ENCODE measurements at regions of chr5 and their contacts with region 1.

Region 1: GRCh38 chr5:132820162-132820754 is 7.2 kb downstream of the SOWAHA start:
- DNase-seq: peak; percentile 61 to 92 (median 80)
- ATAC-seq: peak; percentile 84 to 86 (median 85)
- H3K4me3 ChIP-seq: peak overlapping the region in 1 of 2 donors; percentile 38
- H3K4me3 Mint-ChIP-seq: peak overlapping the region; percentile 45 to 73 (median 67)
- H3K27ac ChIP-seq: no peak overlapping the region
- H3K27ac Mint-ChIP-seq: no peak overlapping the region
- H3K4me1 ChIP-seq: peaks cover 5 to 19% of the 10 kb centered on the region in 2 experiments
- H3K4me1 Mint-ChIP-seq: peaks cover 10 to 12% (median 11%) of the 10 kb centered on the region in 3 donors
- H3K27me3 ChIP-seq: peaks cover 3 to 53% of the 10 kb centered on the region in 2 experiments
- H3K27me3 Mint-ChIP-seq: peaks cover 7 to 42% of the 10 kb centered on the region in 2 donors

Region 2: DNA sequence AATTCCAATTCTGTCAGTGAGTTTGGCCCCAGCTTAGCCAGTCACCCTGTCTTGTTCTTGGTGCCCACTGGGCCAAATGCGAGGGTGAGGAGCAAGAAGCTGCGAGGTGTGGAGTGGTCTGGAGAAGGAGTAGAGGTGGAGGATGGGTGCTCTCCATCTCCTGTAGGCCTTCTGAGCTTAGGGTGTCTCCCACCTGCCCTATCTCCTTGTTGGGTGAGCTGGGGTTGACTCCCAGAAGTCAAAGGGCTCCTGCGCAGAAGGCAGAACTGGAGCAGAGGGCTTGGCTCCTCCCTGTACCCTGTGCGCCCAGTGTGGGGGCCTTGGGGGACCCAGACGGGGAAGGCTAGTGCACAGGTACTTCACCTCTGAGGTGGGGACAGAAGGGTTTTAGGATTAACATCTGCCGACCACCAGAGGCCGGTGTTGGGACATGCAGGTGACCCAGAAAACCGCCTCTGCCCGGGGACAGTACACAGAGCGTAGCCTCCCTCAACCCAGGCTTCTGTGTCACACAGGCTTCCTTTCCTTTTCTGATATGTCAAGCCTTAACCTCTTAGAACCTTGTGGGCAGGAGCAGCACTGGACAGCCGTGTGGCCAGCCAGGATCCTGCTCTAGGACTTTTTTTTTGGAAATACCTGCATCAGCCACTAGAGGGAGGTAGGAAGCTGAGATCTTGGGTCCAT is 293.8 kb before region 1 on chr5:
- CTCF ChIA-PET with region 1: interaction called in 1 of 2 experiments, 10 read pairs
- POLR2A ChIA-PET with region 1: no interaction called
- DNase-seq: peak in 18 of 35 experiments; percentile 5 to 70 (median 16)
- ATAC-seq: peak in 3 of 4 experiments; percentile 60 to 68 (median 68)
- H3K4me3 ChIP-seq: no peak overlapping the region
- H3K4me3 Mint-ChIP-seq: no peak overlapping the region
- H3K27ac ChIP-seq: no peak overlapping the region
- H3K27ac Mint-ChIP-seq: no peak overlapping the region
- H3K4me1 ChIP-seq: peaks cover 2 to 10% of the 10 kb centered on the region in 2 experiments
- H3K4me1 Mint-ChIP-seq: peaks cover 8 to 24% (median 17%) of the 10 kb centered on the region in 3 donors
- H3K27me3 ChIP-seq: no peaks in the 10 kb centered on the region
- H3K27me3 Mint-ChIP-seq: peaks cover 0 to under 1% of the 10 kb centered on the region in 2 donors

Region 3: DNA sequence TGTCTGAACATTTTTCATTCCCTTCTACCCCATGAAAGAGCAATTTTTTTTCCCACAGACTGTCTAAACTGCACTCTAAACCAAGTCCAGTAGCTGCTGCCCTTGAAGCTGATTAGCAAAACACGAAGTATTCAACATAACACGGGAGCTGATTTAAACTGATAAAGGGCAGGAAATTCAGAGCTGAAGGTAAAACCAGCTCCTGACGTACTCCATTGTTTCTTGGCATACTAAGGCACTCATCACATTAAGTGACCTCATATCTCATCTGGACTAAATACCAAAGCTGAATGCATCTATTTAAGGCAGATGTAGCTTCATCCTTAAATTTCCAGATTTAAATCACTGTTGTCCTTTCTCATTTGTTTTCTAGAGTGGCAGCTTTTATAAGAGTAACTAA is 34.0 kb after region 1 on chr5:
- CTCF ChIA-PET with region 1: no interaction called
- POLR2A ChIA-PET with region 1: no interaction called
- DNase-seq: no peak
- ATAC-seq: no peak
- H3K4me3 ChIP-seq: no peak overlapping the region
- H3K4me3 Mint-ChIP-seq: no peak overlapping the region
- H3K27ac ChIP-seq: no peak overlapping the region
- H3K27ac Mint-ChIP-seq: no peak overlapping the region
- H3K4me1 ChIP-seq: no peaks in the 10 kb centered on the region
- H3K4me1 Mint-ChIP-seq: peaks cover 0 to 2% (median 0%) of the 10 kb centered on the region in 3 donors
- H3K27me3 ChIP-seq: peaks cover 0 to 18% of the 10 kb centered on the region in 2 experiments
- H3K27me3 Mint-ChIP-seq: peaks cover 3 to 7% of the 10 kb centered on the region in 2 donors

Region 4: GRCh38 chr5:133245198-133245968 is 425.1 kb after region 1 on chr5:
- CTCF ChIA-PET with region 1: interaction called in 1 of 2 experiments, 10 read pairs
- POLR2A ChIA-PET with region 1: no interaction called
- DNase-seq: no peak
- ATAC-seq: no peak
- H3K4me3 ChIP-seq: no peak overlapping the region
- H3K4me3 Mint-ChIP-seq: no peak overlapping the region
- H3K27ac ChIP-seq: no peak overlapping the region
- H3K27ac Mint-ChIP-seq: peak overlapping the region; percentile 25 to 49
- H3K4me1 ChIP-seq: peaks cover 0 to 11% of the 10 kb centered on the region in 2 experiments
- H3K4me1 Mint-ChIP-seq: peaks cover 14 to 18% (median 15%) of the 10 kb centered on the region in 3 donors
- H3K27me3 ChIP-seq: peaks cover 0 to 13% of the 10 kb centered on the region in 2 experiments
- H3K27me3 Mint-ChIP-seq: no peaks in the 10 kb centered on the region